ENCODE measurements at regions of chr17 and their contacts with region 1.

Region 1: GRCh38 chr17:59651346-59651745 is 31.7 kb downstream of the CLTC start:
- DNase-seq: no peak
- ATAC-seq: no peak
- H3K4me3 ChIP-seq: no peak overlapping the region
- H3K27ac ChIP-seq: no peak overlapping the region
- H3K4me1 ChIP-seq: peaks cover 0 to 19% (median 8%) of the 10 kb centered on the region in 9 donors
- H3K27me3 ChIP-seq: no peaks in the 10 kb centered on the region
- CTCF ChIP-seq: no peak

Region 2: DNA sequence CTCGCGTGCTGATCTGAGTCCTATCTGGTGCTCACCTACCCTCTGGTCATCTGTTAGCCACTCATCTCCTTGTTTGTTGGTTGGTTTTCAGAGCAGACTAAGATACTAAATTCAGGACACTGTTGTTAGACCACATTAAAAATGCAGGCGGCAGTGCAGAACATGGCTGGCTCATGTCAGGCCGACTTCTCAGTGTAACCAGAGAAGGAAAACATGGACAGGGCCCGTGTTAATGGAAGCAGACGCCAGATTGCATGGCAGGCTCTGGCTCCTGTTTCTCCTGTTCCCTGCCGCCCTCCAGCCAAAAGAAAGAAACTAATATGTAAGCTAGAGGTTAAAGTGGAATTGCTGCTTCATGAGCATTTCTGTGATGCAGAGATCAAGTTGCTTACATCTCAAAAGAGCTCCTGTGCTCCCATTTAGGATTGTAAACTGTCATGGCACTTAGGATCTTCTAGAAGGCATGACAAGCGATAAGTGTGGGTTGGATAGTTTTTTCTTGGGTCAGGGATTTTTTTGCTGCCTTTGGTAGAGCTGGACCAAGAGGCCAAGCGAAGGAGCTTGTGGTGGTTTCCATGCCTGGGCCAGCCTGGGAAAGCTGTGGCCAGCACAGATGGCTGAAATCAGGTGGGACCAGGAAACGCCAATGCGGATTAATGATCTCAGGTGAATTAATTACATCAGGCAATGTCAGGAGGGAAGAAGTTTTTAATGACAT is 263.8 kb before region 1 on chr17:
- intact Hi-C with region 1: no loop called
- DNase-seq: no peak
- ATAC-seq: peak in 6 of 8 donors; percentile 23 to 69 (median 50)
- H3K4me3 ChIP-seq: no peak overlapping the region
- H3K27ac ChIP-seq: peak overlapping the region in 8 of 10 donors; percentile 9 to 73 (median 68)
- H3K4me1 ChIP-seq: peaks cover 12 to 85% (median 44%) of the 10 kb centered on the region in 9 donors
- H3K27me3 ChIP-seq: no peaks in the 10 kb centered on the region
- CTCF ChIP-seq: no peak

Region 3: DNA sequence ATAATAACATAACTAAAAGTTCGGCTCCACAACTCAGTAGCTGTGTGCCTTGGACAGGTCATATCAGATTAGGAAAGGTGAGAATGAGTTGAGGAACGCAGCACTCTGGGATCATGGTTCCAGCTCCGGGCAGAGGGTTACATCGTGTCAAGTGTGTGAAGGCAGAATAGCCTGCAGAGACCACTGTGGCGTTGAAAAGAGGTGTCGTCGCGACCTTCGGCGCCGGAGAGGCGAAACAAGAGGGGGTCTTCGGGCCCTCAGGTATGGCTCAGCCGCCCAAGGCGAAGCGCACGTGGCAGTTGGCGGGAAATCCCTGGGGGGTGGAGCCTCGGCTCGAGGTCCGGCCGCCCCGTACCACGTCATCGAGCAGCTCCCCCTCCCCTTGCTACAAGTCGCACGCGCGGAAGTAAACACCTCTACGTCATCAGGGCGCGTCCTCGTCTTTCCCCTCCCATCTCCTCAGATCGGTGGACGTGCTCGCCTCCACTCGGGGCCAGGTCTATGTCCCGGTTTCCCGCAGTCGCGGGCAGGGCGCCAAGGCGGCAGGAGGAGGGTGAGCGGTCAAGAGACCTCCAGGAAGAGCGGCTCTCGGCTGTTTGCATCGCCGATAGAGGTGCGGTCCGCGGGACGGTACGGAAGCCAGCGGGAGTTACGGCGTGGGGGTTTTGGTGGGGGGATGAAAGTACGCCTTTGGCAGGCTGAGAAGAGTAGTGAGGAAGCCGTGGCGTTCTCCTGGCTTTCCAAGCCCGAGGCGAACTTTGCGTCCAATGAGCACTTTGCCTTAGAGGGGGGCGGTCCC is 86.0 kb before region 1 on chr17 and contains the start of gene DHX40:
- intact Hi-C with region 1: no loop called
- DNase-seq: peak; percentile 91 to 96
- ATAC-seq: peak; percentile 97 to 100 (median 99)
- H3K4me3 ChIP-seq: peak within 1 kb of the TSS; percentile 74 to 97 (median 90)
- H3K27ac ChIP-seq: peak within 1 kb of the TSS in 9 of 10 donors; percentile 64 to 93 (median 81)
- H3K4me1 ChIP-seq: peaks cover 0 to 18% (median 13%) of the 10 kb centered on the region in 9 donors
- H3K27me3 ChIP-seq: no peaks in the 10 kb centered on the region
- CTCF ChIP-seq: no peak
- total RNA-seq, gene DHX40: 14.2 to 22.9 (median 20.7) TPM

Region 4: GRCh38 chr17:59688008-59688407 is 36.7 kb after region 1 on chr17:
- intact Hi-C with region 1: loop called in 2 of 10 experiments (anchors 5 kb)
- DNase-seq: no peak
- ATAC-seq: no peak
- H3K4me3 ChIP-seq: no peak overlapping the region
- H3K27ac ChIP-seq: no peak overlapping the region
- H3K4me1 ChIP-seq: peaks cover 0 to 18% (median 0%) of the 10 kb centered on the region in 9 donors
- H3K27me3 ChIP-seq: no peaks in the 10 kb centered on the region
- CTCF ChIP-seq: no peak

Region 5: DNA sequence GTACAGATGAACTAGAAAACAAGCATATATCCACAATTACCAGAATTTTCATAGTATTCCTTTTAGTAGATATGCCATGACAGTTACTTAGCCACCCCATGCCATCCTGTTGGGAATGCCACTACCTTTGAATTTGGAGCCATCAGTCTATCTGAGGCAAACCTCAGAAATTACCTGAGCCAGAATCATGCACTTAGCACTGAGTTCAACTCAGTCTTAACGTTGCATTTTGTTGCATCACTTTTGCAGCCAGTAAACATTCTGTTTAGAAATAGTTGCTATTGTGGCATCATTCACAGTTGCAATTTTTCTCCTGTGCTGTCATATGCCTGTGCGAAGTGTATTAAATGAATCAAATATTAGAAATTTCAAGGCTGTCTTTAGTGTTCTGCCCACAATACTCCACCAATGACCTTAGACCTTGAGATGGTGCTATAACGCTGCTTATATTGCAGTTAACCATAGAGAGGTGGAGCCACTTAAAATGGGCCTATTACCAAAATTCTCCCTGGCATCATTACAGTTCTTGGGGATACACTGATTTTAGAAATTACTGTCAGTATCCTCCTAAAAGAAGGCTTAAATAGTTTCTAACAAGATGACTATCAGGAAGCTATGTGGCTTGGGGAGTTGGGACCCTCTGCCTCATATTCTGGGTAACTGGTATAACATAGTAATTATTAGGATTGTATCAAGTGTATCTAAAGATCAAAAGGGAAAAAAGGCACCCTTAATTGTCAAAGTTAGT is 44.8 kb after region 1 on chr17:
- intact Hi-C with region 1: loop called in 1 of 10 experiments (anchors 5 kb)
- DNase-seq: no peak
- ATAC-seq: no peak
- H3K4me3 ChIP-seq: no peak overlapping the region
- H3K27ac ChIP-seq: no peak overlapping the region
- H3K4me1 ChIP-seq: peaks cover 0 to 4% (median 0%) of the 10 kb centered on the region in 9 donors
- H3K27me3 ChIP-seq: no peaks in the 10 kb centered on the region
- CTCF ChIP-seq: no peak